ENCODE measurements at regions of chr4 and their contacts with region 1.

Region 1: DNA sequence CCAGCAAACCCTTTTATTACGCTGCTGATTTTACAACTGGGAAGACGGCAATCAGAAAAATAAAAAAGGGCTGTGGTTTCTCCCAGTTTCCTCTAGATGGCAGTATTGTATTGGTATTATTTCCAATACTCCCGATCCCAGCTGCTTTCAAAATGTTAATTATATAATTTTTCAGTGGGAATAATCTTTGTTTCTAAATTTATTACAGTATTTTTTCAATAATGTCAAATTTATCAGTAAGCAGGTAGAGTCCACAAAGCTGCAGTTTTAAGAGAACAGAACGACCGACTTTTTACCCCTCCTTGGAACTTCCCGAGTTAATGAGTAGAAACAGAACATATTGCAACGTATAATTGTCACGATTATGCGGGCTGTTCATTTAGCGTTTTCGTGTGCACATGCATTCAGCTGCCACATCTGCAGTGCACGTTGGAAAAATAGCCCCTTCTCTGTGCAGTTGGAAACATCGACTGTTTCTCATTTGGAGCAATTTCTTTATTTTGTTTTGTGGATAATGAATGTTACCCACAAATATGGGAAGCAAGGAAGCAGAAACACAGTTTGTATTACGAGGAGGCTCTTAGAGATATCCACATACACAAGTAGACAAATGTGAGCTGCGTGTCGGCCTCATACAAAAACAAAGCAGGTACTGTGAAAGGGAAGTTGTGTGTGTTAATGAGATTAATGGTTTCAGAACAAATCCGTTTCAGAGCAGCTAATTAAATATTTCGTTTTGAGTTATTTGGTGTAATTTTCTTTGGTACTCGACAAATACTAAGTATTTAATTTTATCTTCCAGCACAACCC is 188.0 kb downstream of the STIM2 start:
- DNase-seq: no peak
- H3K4me3 Mint-ChIP-seq: no peak overlapping the region
- H3K27ac Mint-ChIP-seq: no peak overlapping the region
- H3K4me1 Mint-ChIP-seq: no peaks in the 10 kb centered on the region
- H3K27me3 Mint-ChIP-seq: peaks cover 37% of the 10 kb centered on the region

Region 2: GRCh38 chr4:27318743-27319142 is 270.1 kb after region 1 on chr4:
- intact Hi-C with region 1: loop called (anchors 1 kb)
- DNase-seq: no peak
- H3K4me3 Mint-ChIP-seq: no peak overlapping the region
- H3K27ac Mint-ChIP-seq: no peak overlapping the region
- H3K4me1 Mint-ChIP-seq: no peaks in the 10 kb centered on the region
- H3K27me3 Mint-ChIP-seq: no peaks in the 10 kb centered on the region